Heart right ventricle (tissue), 16 donors: ENCODE measurements at regions of chr19 and their contacts with region 1.

Region 1: DNA sequence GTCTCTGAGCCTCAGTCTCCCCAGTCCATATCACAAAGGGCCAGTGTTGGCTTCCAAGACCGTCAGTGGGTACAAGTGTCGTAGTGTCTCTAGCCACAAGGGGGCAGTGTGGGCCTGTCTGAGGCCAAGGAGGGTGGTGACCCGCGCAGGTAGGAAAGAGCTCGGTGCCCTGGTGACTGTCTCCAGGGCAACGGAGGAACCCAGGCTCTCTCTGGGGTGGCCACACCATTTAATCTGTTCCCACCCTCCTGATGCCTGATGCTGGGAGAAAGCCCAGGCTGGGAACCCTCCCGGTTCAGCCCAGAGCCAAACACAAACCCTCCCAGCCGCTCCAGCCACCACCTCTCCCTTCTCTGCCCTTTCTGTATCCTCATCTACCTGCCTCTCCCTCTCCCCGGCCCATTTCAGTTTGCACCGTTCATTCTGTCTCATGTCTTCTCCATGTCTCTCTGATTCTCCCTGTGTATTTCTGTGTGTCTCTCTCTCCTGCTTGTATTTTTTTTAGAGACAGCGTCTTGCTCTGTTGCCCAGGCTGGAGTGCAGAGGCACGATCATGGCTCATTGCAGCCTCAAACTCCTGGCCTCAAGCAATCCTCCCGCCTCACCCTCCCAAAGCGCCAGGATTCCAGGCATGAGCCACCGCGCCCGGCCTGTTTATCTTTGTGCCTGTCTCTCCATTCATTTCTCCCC is 17.5 kb upstream of the MEIS3 start:
- DNase-seq: peak; percentile 74 to 75
- ATAC-seq: peak; percentile 88 to 94 (median 92)
- H3K4me3 ChIP-seq: no peak overlapping the region
- H3K27ac ChIP-seq: no peak overlapping the region
- H3K4me1 ChIP-seq: peaks cover 0 to 7% (median 0%) of the 10 kb centered on the region in 9 donors
- H3K27me3 ChIP-seq: peaks cover 0 to 86% (median 64%) of the 10 kb centered on the region in 7 donors
- CTCF ChIP-seq: peak; percentile 83 to 93 (median 89)

Region 2: DNA sequence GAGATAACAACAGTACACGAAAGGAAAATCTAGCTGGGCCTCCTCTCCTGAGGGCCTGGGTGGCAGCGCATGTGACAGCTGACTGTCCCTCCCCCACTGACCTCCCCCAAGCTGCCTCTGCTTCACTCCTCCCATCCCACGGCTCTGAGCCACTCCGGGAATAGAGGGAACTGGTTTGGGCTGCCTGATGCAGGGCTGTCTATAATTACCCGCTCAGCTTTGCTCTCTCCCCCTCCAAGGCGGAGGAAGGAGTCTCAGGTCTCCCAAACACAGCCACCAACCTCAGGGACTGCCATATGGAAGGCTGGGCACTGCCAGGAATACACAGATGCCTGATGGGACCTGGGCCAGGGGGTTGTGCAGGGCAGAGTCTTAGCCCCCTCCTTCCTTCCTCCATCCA is 70.2 kb after region 1 on chr19:
- intact Hi-C with region 1: loop called in 2 of 10 experiments (anchors 5 to 10 kb)
- DNase-seq: peak in 1 of 2 donors; percentile 75
- ATAC-seq: peak; percentile 64 to 91 (median 88)
- H3K4me3 ChIP-seq: peak overlapping the region in 1 of 10 donors; percentile 11
- H3K27ac ChIP-seq: peak overlapping the region; percentile 21 to 96 (median 74)
- H3K4me1 ChIP-seq: peaks cover 28 to 73% (median 63%) of the 10 kb centered on the region in 9 donors
- H3K27me3 ChIP-seq: no peaks in the 10 kb centered on the region
- CTCF ChIP-seq: no peak

Region 3: DNA sequence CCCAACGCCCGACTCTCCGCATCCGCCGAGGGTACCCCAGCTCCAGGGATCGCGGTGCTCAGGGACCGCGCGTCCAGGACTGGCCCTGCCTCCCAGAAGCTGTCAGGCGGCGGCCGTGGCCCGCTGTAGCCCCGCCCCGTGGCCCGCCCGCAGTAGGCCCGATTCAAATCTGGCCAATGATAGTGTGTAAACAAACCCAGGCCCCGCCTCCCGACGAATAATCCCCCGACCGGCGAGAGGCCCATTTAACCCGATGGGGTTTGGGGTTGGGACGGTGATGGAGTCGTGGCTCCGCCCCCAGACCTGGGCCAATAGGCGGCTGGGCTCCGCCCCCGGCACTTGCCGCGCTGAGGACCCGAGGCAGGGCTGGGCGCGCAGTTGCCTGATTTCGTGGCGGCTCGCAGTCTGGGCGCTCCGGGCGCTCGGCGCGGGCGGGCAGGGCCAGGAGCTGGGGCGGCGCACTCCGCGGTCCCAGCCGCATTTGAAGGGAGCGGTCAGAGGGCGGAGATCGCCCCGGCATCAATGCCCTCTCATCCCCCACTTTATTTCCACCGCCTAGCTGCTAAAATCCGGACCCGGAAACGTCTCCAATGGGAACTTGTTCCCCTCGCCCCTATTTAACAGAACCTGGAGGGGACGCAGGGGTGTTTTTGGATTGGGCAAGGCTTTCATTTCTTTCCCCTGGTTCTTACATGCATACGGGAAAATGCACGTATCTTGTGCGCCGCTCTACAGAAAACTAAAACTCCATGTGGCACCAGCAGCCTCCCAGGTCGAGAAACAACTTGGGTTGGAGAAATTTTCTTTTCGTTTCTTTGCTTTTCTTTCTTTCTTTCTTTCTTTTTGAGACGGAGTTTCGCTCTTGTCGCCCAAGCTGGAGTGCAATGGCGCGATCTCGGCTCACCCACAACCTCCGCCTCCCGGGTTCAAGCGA is 163.7 kb after region 1 on chr19:
- intact Hi-C with region 1: loop called in 1 of 10 experiments (anchors 5 kb)
- DNase-seq: peak; percentile 99 to 100
- ATAC-seq: peak; percentile 98 to 100 (median 98)
- H3K4me3 ChIP-seq: peak overlapping the region; percentile 16 to 73 (median 64)
- H3K27ac ChIP-seq: peak overlapping the region; percentile 44 to 92 (median 86)
- H3K4me1 ChIP-seq: peaks cover 2 to 46% (median 22%) of the 10 kb centered on the region in 9 donors
- H3K27me3 ChIP-seq: no peaks in the 10 kb centered on the region
- CTCF ChIP-seq: peak in 1 of 9 donors; percentile 13

Region 4: DNA sequence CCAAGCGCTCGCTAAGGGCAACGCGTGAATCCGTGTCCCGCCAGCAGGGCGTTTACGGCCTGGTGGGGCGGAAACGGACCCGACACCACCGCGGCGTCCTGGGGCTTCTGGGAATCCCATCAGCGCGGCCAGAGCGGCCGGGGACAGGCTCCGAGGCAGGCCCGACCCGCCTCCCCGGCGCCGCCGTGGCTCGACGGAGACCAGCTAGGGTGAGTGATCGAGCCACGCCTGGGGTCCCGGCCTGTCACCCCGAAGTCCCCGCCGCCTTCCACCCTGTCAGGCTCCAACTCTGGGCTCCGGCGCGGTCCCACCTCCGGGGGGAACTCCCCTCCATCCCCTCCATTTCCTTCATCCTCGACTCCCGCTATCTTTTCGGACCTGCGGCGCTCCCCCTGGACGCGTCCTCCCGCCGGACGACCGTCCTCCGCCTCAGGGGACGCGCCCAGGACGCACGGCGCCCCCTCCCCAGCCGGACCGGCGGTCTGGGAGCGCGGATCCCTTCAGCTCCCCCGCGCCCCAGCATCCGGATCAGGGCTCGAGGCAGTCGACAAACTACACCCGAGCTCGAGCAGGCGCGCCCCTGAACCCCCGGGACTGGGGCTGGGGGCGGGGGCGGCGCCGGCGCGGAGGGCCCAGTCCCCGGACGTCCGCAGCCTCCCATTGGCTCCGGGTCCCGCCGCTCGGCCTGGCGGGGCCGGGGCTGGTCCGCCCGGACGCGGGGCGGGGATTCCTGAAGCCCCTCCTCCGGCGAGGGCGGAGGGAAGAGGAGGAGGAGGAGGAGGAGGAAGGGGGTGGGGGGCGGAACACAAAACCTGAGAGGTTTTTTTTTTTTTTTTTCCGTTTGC is 171.4 kb after region 1 on chr19:
- intact Hi-C with region 1: loop called in 1 of 10 experiments (anchors 10 kb)
- DNase-seq: peak; percentile 95 to 97
- ATAC-seq: peak; percentile 94 to 96 (median 96)
- H3K4me3 ChIP-seq: peak overlapping the region; percentile 80 to 100 (median 96)
- H3K27ac ChIP-seq: peak overlapping the region; percentile 92 to 100 (median 98)
- H3K4me1 ChIP-seq: peaks cover 18 to 44% (median 39%) of the 10 kb centered on the region in 9 donors
- H3K27me3 ChIP-seq: no peaks in the 10 kb centered on the region
- CTCF ChIP-seq: peak in 5 of 9 donors; percentile 14 to 46 (median 42)

Region 5: GRCh38 chr19:47697863-47698609 is 261.2 kb after region 1 on chr19:
- intact Hi-C with region 1: loop called in 9 of 10 experiments (anchors 2 to 5 kb)
- DNase-seq: peak; percentile 73 to 75
- ATAC-seq: peak; percentile 79 to 90 (median 84)
- H3K4me3 ChIP-seq: no peak overlapping the region
- H3K27ac ChIP-seq: peak overlapping the region in 7 of 10 donors; percentile 25 to 73 (median 66)
- H3K4me1 ChIP-seq: peaks cover 0 to 10% (median 6%) of the 10 kb centered on the region in 9 donors
- H3K27me3 ChIP-seq: no peaks in the 10 kb centered on the region
- CTCF ChIP-seq: peak; percentile 91 to 99 (median 96)

Region 6: DNA sequence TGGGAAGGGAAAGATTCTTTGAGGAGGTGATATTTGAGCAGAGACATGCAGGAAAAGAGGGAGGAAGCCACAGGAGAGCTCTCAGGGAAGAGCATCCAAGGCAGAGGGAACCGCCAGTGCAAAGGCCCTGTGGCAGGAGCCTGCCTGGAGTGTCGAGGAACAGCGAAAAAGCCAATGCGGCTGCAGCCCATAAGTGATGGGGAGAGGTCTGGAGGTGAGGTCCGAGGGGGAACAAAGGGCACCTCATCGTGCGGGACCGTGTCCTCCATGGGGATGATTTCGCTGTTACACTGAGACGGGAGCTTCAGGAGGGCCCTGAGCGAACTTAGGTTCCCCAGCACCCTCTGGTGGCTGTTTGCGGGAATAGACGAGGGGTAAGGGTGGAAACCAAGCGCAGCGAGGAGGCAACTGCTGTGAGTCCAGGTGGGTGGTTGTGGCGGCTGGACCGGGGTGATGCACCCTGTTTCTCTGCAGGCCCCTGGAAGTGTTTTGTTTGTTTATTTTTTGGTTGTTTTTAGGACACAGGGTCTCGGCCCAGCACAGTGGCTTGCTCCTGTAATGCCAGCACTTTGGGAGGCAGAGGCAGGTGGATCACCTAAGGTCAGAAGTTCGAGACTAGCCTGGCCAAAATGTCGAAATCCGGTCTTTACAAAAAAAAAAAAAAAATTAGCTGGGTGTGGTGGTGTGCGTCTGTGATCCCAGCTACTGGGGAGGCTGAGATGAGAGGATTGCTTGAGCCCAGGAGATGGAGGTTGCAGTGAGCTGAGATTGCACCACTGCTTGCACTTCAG is 270.5 kb after region 1 on chr19:
- intact Hi-C with region 1: loop called in 2 of 10 experiments (anchors 1 to 2 kb)
- DNase-seq: peak; percentile 58 to 68
- ATAC-seq: peak; percentile 61 to 87 (median 82)
- H3K4me3 ChIP-seq: no peak overlapping the region
- H3K27ac ChIP-seq: no peak overlapping the region
- H3K4me1 ChIP-seq: no peaks in the 10 kb centered on the region
- H3K27me3 ChIP-seq: peaks cover 0 to 12% (median 0%) of the 10 kb centered on the region in 7 donors
- CTCF ChIP-seq: peak; percentile 52 to 84 (median 77)